CD8-positive, alpha-beta memory T cell (primary cell): ENCODE measurements at regions of chr10 and their contacts with region 1.

Region 1: GRCh38 chr10:43348511-43349312 is 22.7 kb upstream of the FXYD4 start:
- DNase-seq: peak; percentile 77 to 90 (median 80)
- H3K4me3 ChIP-seq: no peak overlapping the region
- H3K4me3 Mint-ChIP-seq: peak overlapping the region in 1 of 7 donors; percentile 9
- H3K27ac ChIP-seq: no peak overlapping the region
- H3K27ac Mint-ChIP-seq: peak overlapping the region in 6 of 8 donors; percentile 4 to 49 (median 42)
- H3K4me1 ChIP-seq: peaks cover 11% of the 10 kb centered on the region
- H3K4me1 Mint-ChIP-seq: peaks cover 15 to 30% (median 19%) of the 10 kb centered on the region in 3 donors
- H3K27me3 ChIP-seq: no peaks in the 10 kb centered on the region
- H3K27me3 Mint-ChIP-seq: peaks cover 15 to 24% of the 10 kb centered on the region in 2 donors

Region 2: GRCh38 chr10:42697926-42698325 is 650.8 kb before region 1 on chr10:
- CTCF ChIA-PET with region 1: no interaction called
- POLR2A ChIA-PET with region 1: no interaction called
- DNase-seq: no peak
- H3K4me3 ChIP-seq: no peak overlapping the region
- H3K4me3 Mint-ChIP-seq: no peak overlapping the region
- H3K27ac ChIP-seq: no peak overlapping the region
- H3K27ac Mint-ChIP-seq: no peak overlapping the region
- H3K4me1 ChIP-seq: no peaks in the 10 kb centered on the region
- H3K4me1 Mint-ChIP-seq: no peaks in the 10 kb centered on the region
- H3K27me3 ChIP-seq: no peaks in the 10 kb centered on the region
- H3K27me3 Mint-ChIP-seq: peaks cover 14 to 47% of the 10 kb centered on the region in 2 donors

Region 3: DNA sequence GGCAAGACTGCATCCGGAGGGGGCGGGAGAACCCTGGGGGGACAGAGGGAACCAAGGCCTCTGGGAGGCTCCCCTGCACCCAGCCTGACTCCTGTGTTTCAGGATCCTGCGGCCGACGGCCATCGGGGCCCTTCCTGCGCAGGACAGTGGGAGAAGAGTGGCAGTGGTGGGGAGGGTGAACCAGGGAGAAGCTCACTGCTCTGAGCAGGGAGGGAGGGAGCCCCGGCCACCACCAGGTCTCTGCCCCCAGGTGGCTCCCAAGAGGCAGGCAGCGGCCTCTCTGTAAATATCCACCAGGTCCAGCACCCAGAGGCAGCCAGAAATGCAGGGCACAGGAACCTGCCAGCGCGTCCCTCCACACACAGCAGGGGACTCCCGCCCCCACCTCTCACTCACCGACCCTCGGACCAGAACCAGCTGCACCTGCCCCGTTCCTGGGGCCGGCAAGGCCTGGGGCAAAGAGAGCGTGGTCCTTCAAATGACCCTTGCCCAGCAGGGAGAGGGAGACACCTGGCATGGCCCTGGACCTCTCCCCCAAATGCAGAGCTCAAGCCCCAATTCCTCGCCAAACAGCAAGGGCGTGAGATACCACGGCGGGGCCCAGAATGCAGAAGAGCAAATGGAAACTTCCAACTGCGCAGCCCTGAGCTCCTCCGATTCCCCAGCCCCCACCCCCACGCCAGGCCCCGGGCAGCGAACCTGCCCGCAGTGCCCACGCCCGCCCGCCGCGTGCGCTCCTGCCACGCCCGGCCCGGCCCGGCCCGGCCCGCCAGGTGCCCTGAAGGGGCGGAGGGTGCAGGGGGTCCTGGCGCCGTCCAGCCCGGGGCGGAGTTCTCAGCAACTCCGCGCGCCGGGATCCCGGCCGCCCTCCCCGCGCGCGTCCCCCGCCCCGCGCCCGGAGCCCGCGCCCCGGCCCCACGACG is 82.7 kb before region 1 on chr10:
- CTCF ChIA-PET with region 1: interaction called, 56 read pairs
- POLR2A ChIA-PET with region 1: interaction called, 3 read pairs
- DNase-seq: peak in 3 of 5 donors; percentile 35 to 76 (median 44)
- H3K4me3 ChIP-seq: peak overlapping the region; percentile 51
- H3K4me3 Mint-ChIP-seq: peak overlapping the region; percentile 85 to 91 (median 88)
- H3K27ac ChIP-seq: no peak overlapping the region
- H3K27ac Mint-ChIP-seq: peak overlapping the region in 4 of 8 donors; percentile 14 to 80 (median 76)
- H3K4me1 ChIP-seq: peaks cover 7% of the 10 kb centered on the region
- H3K4me1 Mint-ChIP-seq: peaks cover 4 to 29% (median 8%) of the 10 kb centered on the region in 3 donors
- H3K27me3 ChIP-seq: peaks cover 21% of the 10 kb centered on the region
- H3K27me3 Mint-ChIP-seq: peaks cover 27 to 41% of the 10 kb centered on the region in 2 donors

Region 4: GRCh38 chr10:43287056-43288007 is 61.4 kb before region 1 on chr10:
- CTCF ChIA-PET with region 1: interaction called, 67 read pairs
- POLR2A ChIA-PET with region 1: no interaction called
- DNase-seq: peak in 3 of 5 donors; percentile 36 to 73 (median 46)
- H3K4me3 ChIP-seq: peak overlapping the region; percentile 3
- H3K4me3 Mint-ChIP-seq: peak overlapping the region in 6 of 7 donors; percentile 56 to 86 (median 64)
- H3K27ac ChIP-seq: no peak overlapping the region
- H3K27ac Mint-ChIP-seq: peak overlapping the region; percentile 76 to 99 (median 85)
- H3K4me1 ChIP-seq: peaks cover 25% of the 10 kb centered on the region
- H3K4me1 Mint-ChIP-seq: peaks cover 44 to 66% (median 52%) of the 10 kb centered on the region in 3 donors
- H3K27me3 ChIP-seq: no peaks in the 10 kb centered on the region
- H3K27me3 Mint-ChIP-seq: no peaks in the 10 kb centered on the region

Region 5: GRCh38 chr10:43292755-43293676 is 55.7 kb before region 1 on chr10:
- CTCF ChIA-PET with region 1: interaction called, 67 read pairs
- POLR2A ChIA-PET with region 1: no interaction called
- DNase-seq: peak in 4 of 5 donors; percentile 17 to 62 (median 36)
- H3K4me3 ChIP-seq: peak overlapping the region; percentile 8
- H3K4me3 Mint-ChIP-seq: peak overlapping the region; percentile 37 to 74 (median 69)
- H3K27ac ChIP-seq: no peak overlapping the region
- H3K27ac Mint-ChIP-seq: peak overlapping the region; percentile 80 to 93 (median 90)
- H3K4me1 ChIP-seq: peaks cover 43% of the 10 kb centered on the region
- H3K4me1 Mint-ChIP-seq: peaks cover 60 to 82% (median 80%) of the 10 kb centered on the region in 3 donors
- H3K27me3 ChIP-seq: no peaks in the 10 kb centered on the region
- H3K27me3 Mint-ChIP-seq: no peaks in the 10 kb centered on the region

Region 6: DNA sequence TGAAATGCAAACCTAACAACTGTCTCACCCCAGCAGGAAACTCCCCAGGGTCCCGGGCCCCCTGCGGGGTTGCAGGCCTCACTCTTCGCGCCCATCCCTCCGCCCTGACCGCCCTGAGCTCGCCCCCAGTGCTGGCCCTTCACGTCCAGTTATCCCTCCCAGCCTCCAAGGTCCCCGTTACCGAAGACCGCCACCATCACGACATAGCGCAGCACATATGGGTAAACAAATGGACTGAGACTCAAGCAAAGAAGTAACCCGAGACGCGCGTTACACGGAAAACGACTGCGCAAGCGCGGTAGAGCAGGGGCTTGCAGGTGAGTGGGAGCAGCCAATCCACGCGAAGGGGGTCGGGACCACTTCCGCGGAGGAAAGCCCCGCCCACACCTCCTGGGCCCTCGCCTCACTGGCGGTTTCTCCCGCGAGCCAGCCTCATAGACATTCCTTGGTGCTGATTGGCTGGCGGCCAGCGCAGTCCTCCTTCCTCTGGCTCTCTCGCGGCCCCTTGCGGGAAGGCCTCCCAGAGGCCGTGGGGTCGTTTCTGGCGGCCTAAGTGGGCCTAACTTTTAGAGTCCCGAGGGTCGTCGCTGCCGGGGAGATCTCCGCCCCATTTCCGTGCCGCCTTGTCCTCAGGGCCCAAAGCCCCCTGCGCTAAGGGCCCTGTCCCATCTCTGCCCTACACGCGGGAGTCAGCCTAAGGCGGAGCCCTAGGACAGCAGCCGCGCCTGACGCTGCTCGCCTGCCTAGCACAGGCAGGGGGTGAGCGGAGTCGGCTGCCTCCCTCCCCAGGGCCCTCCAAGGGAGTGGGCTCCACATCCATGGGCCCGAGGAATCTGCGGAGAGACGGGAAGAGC is 13.5 kb after region 1 on chr10:
- CTCF ChIA-PET with region 1: interaction called, 15 read pairs
- POLR2A ChIA-PET with region 1: interaction called, 5 read pairs
- DNase-seq: peak; percentile 96 to 99 (median 97)
- H3K4me3 ChIP-seq: peak overlapping the region; percentile 97
- H3K4me3 Mint-ChIP-seq: peak overlapping the region; percentile 92 to 100 (median 97)
- H3K27ac ChIP-seq: peak overlapping the region; percentile 88
- H3K27ac Mint-ChIP-seq: peak overlapping the region; percentile 86 to 99 (median 96)
- H3K4me1 ChIP-seq: peaks cover 19% of the 10 kb centered on the region
- H3K4me1 Mint-ChIP-seq: peaks cover 27 to 30% (median 27%) of the 10 kb centered on the region in 3 donors
- H3K27me3 ChIP-seq: no peaks in the 10 kb centered on the region
- H3K27me3 Mint-ChIP-seq: peaks cover 0 to 2% of the 10 kb centered on the region in 2 donors